ENCODE measurements at regions of chr2 and their contacts with region 1.

Region 1: DNA sequence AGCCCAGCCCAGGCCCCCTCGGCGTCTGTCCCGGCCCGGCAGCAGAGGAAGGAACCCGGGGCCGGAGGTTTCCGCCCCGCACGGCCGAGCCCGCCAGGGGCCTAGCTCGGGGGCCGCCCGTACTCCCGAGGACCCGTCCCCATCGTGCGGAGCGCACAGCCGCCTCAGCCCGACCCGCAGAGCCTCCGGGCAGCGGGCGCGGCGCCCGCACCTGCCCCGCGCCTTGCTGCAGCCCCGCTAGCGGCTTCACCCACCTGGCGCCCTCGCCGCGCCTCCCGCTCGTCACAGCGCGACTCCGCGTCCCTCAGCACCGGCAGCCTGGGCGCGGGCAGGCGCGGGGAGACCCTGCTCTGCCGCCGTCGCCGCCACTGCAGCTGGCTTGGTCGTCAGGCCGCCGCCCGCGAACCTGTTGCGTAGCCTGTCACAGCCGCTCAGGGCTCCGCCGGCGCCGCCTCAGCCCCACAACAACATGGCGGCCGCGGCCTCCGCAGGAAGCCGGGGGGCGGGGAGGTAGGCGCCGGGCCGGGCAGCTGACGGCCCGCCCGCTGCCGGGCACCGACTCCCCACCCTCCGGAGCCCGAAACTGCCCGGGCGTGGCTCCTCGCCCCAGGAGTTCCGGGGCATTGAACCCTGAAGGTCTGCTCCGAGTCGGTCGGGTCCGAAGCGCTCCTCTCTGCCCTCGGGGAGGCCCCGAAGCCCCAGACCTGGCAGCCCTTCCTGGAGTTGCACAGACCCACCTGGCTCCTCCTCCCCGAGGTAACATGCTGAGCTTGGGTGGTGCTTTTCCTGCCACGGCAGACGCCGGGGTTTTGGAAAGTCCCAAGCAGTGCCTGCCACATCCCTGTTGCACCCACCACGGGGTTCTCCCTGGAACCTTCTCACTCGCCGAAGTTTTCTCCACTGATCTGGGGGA is at the start of gene ITSN2:
- DNase-seq: peak; percentile 81
- H3K4me3 Mint-ChIP-seq: peak within 1 kb of the TSS; percentile 91
- H3K27ac Mint-ChIP-seq: peak within 1 kb of the TSS; percentile 93
- H3K4me1 Mint-ChIP-seq: peaks cover 29% of the 10 kb centered on the region
- H3K27me3 Mint-ChIP-seq: no peaks in the 10 kb centered on the region
- total RNA-seq, gene ITSN2: 52.9 and 57.1 TPM in 2 replicates

Region 2: GRCh38 chr2:23939987-23940717 is 420.2 kb before region 1 on chr2 and contains the start of gene UBXN2A:
- intact Hi-C with region 1: loop called (anchors 1 kb)
- DNase-seq: peak; percentile 72
- H3K4me3 Mint-ChIP-seq: peak within 1 kb of the TSS; percentile 89
- H3K27ac Mint-ChIP-seq: peak within 1 kb of the TSS; percentile 74
- H3K4me1 Mint-ChIP-seq: peaks cover 26% of the 10 kb centered on the region
- H3K27me3 Mint-ChIP-seq: peaks cover 21% of the 10 kb centered on the region
- total RNA-seq, gene UBXN2A: 11.4 and 13.0 TPM in 2 replicates

Region 3: GRCh38 chr2:24123195-24123921 is 236.9 kb before region 1 on chr2 and contains the starts of genes FAM228B and PFN4:
- intact Hi-C with region 1: loop called (anchors 10 kb)
- DNase-seq: peak; percentile 66
- H3K4me3 Mint-ChIP-seq: peak within 1 kb of the TSS; percentile 85
- H3K27ac Mint-ChIP-seq: peak within 1 kb of the TSS; percentile 86
- H3K4me1 Mint-ChIP-seq: peaks cover 15% of the 10 kb centered on the region
- H3K27me3 Mint-ChIP-seq: no peaks in the 10 kb centered on the region
- total RNA-seq, gene FAM228B: 3.1 and 4.8 TPM in 2 replicates
- total RNA-seq, gene PFN4: not detected in 2 replicates

Region 4: GRCh38 chr2:24315669-24316068 is 44.6 kb before region 1 on chr2:
- intact Hi-C with region 1: loop called (anchors 5 kb)
- DNase-seq: no peak
- H3K4me3 Mint-ChIP-seq: no peak overlapping the region
- H3K27ac Mint-ChIP-seq: no peak overlapping the region
- H3K4me1 Mint-ChIP-seq: peaks cover 10% of the 10 kb centered on the region
- H3K27me3 Mint-ChIP-seq: no peaks in the 10 kb centered on the region

Region 5: DNA sequence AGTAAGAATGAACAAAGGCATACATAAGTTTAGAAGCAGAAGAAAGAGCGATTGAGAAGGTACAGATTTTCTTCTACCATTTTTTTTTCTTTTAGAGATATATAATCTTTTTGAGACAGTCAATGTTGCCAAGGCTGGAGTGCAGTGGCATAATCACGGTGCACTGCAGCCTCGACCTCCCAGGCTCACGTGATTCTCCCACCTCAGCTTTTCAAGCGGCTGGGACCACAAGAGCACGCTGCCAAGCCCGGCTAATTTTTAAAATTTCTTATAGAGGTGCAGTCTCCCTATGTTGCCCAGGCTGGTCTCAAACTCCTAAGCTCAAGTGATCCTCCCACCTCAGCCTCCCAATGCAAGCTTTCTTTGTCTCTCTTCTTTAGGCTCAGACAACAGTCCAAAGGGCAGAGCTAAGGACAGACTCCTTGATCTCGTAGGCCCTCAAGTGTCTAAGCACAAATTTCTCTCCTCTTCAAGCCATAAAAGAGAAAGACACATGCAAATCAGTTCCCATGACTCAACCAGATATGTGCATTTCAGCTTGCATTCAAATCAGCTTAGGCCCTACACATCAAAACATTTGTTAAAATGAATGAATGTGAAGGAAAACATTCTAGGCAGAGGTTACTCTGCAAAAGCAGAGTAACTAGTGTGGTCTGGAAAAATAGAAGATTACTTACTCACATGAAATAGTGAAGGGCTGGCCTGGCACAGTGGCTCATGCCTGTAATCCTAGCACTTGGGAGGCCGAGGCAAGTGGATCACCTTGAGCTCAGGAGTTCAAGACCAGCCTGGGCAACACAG is 18.0 kb before region 1 on chr2:
- intact Hi-C with region 1: no loop called
- DNase-seq: no peak
- H3K4me3 Mint-ChIP-seq: no peak overlapping the region
- H3K27ac Mint-ChIP-seq: no peak overlapping the region
- H3K4me1 Mint-ChIP-seq: peaks cover 19% of the 10 kb centered on the region
- H3K27me3 Mint-ChIP-seq: no peaks in the 10 kb centered on the region

Measured in activated T-helper 1 cell treated with anti-CD3 and anti-CD28 coated beads, Interleukin-12 subunit alpha, Interleukin-12 subunit beta, Interleukin-2, Interleukin-4 antibody, amounts not matched to agents 30 ng/mL and 10 ng/mL and 1 ng/mL, durations not matched to agents 14 hours and 24 hours and 36 hours (primary cell).